Panc1 (cell line): ENCODE measurements at regions of chr5 and their contacts with region 1.

Region 1: DNA sequence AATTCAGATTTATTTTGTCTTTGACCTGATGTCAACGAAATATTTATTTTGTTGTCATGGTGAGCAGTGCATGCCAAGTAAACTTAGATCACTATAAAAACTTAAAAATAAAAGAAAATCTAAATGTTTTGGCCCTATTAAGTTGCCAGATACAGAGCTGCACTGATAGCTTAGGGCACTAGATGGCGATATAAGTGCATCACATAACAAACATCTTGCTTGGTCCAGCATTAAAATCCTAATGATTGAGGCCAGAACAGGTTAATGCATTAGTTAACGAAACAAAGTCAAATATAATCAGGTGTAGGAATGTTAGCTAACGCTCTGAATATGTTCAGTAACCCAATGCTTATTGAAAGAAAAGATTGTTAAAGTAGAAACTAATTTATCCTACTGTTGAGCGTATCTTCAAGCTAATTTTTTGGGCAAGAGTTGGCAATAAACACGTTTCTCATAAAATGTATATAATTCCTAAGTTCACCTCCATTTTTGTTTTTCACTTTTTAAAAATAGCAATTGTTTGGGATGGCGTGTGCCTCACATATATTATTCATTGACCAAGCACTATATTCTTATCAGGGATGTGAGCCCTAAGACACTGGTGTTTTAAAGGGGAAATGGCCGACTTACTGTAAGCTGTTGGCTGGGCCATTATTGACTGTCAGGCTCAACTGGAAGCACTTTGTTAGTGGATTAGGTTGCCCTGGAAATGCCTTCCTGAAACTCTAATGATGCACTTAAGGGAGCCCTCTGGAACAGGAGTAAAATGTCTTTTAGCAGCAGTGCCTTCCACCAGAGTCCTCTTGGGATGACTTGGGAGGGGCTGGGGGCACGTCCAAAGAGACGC is 33.3 kb downstream of the KCTD16 start:
- DNase-seq: peak; percentile 72
- ATAC-seq: peak; percentile 89
- H3K4me3 ChIP-seq: no peak overlapping the region
- H3K27ac ChIP-seq: no peak overlapping the region
- H3K4me1 ChIP-seq: no peaks in the 10 kb centered on the region
- H3K27me3 ChIP-seq: peaks cover 41% of the 10 kb centered on the region
- CTCF ChIP-seq: peak; percentile 82; the same call in 1 of the 2 replicates

Region 2: GRCh38 chr5:144072518-144072927 is 131.4 kb before region 1 on chr5:
- CTCF ChIA-PET with region 1: no interaction called
- POLR2A ChIA-PET with region 1: no interaction called
- in situ Hi-C with region 1: no loop called
- intact Hi-C with region 1: no loop called
- DNase-seq: no peak
- ATAC-seq: no peak
- H3K4me3 ChIP-seq: no peak overlapping the region
- H3K27ac ChIP-seq: no peak overlapping the region
- H3K4me1 ChIP-seq: no peaks in the 10 kb centered on the region
- H3K27me3 ChIP-seq: no peaks in the 10 kb centered on the region
- CTCF ChIP-seq: no peak

Region 3: DNA sequence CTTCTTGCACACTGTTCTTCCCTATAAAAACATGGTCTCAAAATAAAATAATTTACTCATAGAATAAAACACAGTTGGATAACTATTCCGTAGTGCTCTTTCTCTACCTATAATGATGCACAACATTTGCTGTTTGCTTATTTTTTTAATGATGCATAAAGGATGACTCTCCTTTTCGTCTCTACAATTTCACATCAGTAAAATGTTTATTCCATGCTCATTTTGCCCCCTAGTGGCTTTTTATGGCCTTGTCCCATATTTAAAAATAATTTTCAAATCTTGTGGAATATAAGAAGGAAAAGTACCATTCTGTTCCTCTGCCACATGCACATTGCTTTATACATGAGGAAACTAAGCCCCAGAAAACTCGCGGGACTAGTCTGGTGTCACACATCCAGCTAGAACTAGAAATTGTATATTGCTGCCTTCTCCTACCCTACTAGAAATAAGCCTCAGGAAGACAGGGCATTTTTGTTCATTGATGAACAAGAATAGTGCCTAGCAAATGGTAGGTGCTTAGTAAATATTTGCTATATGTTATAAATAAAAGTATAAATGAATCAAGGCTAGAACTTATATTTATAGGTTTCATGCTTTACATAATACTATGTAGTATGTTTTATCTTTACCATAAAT is 20.6 kb before region 1 on chr5:
- CTCF ChIA-PET with region 1: no interaction called
- POLR2A ChIA-PET with region 1: no interaction called
- in situ Hi-C with region 1: no loop called
- intact Hi-C with region 1: no loop called
- DNase-seq: no peak
- ATAC-seq: peak; percentile 62; the same call in 1 of the 2 replicates
- H3K4me3 ChIP-seq: no peak overlapping the region
- H3K27ac ChIP-seq: no peak overlapping the region
- H3K4me1 ChIP-seq: no peaks in the 10 kb centered on the region
- H3K27me3 ChIP-seq: no peaks in the 10 kb centered on the region
- CTCF ChIP-seq: peak; percentile 72; the same call in 1 of the 2 replicates

Region 4: DNA sequence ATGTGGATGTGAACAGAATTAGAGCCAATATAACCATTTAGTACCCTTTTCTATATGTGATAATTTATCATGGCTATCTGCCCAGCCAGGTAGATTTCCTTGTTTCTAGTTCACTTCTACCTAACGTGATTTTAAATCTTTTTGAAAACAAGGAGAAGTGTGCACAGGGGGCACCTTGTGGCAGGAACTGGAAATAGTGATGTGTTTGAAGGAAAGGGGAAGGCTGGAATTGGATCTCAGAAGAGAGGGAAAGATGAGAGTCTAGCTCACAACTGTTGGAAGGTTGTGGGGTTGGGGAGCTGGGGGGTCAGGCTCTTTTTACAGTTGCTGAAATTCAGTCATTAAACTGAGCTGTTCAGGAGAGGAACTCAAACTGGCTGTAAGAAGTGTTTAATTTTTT is 186.2 kb after region 1 on chr5:
- CTCF ChIA-PET with region 1: no interaction called
- POLR2A ChIA-PET with region 1: no interaction called
- in situ Hi-C with region 1: no loop called
- intact Hi-C with region 1: loop called (anchors 10 kb)
- DNase-seq: no peak
- ATAC-seq: no peak
- H3K4me3 ChIP-seq: no peak overlapping the region
- H3K27ac ChIP-seq: no peak overlapping the region
- H3K4me1 ChIP-seq: no peaks in the 10 kb centered on the region
- H3K27me3 ChIP-seq: no peaks in the 10 kb centered on the region
- CTCF ChIP-seq: peak; percentile 17; the same call in 1 of the 2 replicates

Region 5: DNA sequence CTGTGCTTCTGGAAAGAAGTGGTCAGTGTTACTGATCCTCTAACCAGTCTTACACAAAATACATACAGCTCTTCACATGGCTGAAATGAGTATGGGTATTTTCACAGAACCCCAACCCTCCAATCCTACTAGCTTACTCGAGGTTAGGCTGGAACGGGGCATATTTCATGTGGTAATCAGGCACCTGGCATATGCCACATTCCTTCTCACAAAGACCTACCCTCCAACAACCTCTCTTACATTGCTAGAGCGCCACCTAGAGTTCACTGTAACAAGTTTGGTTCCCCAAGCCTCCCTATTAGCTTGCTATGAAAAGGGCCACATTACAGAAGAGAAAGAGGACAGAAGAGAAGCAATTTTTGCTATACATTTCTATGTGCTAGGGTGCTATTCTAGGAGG is 1033.9 kb after region 1 on chr5:
- CTCF ChIA-PET with region 1: interaction called, 3 read pairs
- POLR2A ChIA-PET with region 1: no interaction called
- in situ Hi-C with region 1: no loop called
- intact Hi-C with region 1: loop called (anchors 5 kb)
- DNase-seq: peak; percentile 28
- ATAC-seq: peak; percentile 82
- H3K4me3 ChIP-seq: no peak overlapping the region
- H3K27ac ChIP-seq: no peak overlapping the region
- H3K4me1 ChIP-seq: no peaks in the 10 kb centered on the region
- H3K27me3 ChIP-seq: no peaks in the 10 kb centered on the region; the same call in 1 of the 2 replicates
- CTCF ChIP-seq: peak; percentile 68

Region 6: DNA sequence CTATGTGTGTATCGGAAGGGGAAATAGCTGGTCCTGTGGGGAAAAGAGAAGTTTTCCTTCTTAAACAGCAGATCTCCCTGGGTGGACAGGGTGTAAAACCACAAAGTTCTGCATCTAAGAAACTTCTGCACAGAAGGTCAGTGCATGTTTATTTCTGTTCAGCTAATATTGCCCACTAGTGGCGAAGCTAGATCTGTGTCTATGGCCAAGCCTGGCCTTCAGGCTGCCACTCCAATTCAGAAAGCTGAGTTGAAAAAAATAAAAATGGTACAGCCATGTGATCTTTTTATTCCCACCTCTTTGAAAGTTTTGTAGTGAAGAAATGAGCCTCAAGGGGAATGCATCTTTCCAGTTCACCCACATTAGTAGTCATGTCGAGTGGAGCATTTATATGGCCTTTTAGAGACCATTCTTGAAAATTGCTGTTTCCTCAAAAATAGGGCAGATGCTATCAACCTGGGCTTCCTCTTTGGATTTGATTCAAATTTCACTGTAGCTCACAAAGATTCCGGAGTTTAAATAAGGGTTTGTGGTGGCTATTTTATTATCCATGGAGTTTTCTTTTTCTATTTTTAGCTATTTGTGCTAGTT is 1143.1 kb after region 1 on chr5:
- CTCF ChIA-PET with region 1: no interaction called
- POLR2A ChIA-PET with region 1: no interaction called
- in situ Hi-C with region 1: no loop called
- intact Hi-C with region 1: loop called (anchors 5 kb)
- DNase-seq: no peak
- ATAC-seq: peak; percentile 82
- H3K4me3 ChIP-seq: no peak overlapping the region
- H3K27ac ChIP-seq: no peak overlapping the region
- H3K4me1 ChIP-seq: no peaks in the 10 kb centered on the region
- H3K27me3 ChIP-seq: no peaks in the 10 kb centered on the region
- CTCF ChIP-seq: peak; percentile 74

Region 7: GRCh38 chr5:145825751-145826180 is 1621.8 kb after region 1 on chr5:
- CTCF ChIA-PET with region 1: no interaction called
- POLR2A ChIA-PET with region 1: no interaction called
- in situ Hi-C with region 1: no loop called
- intact Hi-C with region 1: loop called (anchors 5 kb)
- DNase-seq: no peak
- ATAC-seq: peak; percentile 78
- H3K4me3 ChIP-seq: no peak overlapping the region
- H3K27ac ChIP-seq: no peak overlapping the region
- H3K4me1 ChIP-seq: peaks cover 21% of the 10 kb centered on the region; the same call in 1 of the 2 replicates
- H3K27me3 ChIP-seq: no peaks in the 10 kb centered on the region
- CTCF ChIP-seq: peak; percentile 80